GM12878 (cell line): ENCODE measurements at regions of chr6 and their contacts with region 1.

Region 1: GRCh38 chr6:42166444-42167141 is 6.6 kb upstream of the GUCA1A start:
- DNase-seq: peak; percentile 40
- ATAC-seq: peak; percentile 95
- H3K4me3 ChIP-seq: no peak overlapping the region
- H3K27ac ChIP-seq: no peak overlapping the region
- H3K4me1 ChIP-seq: no peaks in the 10 kb centered on the region
- H3K27me3 ChIP-seq: peaks cover 0 to 2% of the 10 kb centered on the region in 2 experiments; a peak in 2 of 4 replicates
- CTCF ChIP-seq: peak; percentile 95 to 98 (median 95); a peak in 5 of 6 replicates
- EP300 ChIP-seq: no peak
- POLR2A ChIP-seq: no peak
- RAD21 ChIP-seq: peak; percentile 97

Region 2: DNA sequence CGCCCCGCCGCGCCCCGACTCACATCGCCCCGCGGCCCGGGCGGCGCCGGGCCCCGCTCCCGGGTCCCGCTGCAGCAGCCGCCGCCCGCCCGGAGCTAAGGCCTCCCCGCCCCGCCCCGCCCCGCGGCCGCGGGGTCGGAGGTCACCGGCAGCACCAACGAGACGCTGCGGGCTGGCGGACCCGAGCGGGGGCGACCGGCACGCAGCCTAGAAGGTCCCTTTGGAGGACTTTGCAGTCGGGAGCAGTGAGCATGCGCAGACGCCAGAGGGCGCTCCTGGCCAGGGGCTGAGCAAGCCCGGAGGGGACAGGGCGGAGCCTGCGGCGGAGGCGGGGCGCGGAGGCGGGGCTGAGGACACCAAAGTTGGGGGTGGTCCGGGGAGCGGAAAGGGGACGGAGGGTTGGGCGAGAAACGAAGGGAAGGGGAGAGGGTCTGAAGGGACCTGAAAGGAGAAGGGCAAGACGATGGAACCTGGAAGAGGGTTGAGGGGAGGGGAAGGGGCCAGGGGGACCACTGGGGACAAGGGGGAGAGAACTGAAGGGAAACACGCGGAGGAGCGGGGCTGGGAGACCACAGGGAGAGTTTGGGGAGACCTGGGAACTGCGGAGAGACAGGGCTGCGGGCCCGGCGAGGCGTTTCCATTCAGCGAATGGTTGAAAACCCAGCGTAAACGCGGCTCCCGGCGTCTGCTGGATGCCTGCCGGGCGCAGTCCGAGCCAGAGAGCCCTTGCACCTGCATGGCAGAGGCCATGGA is 386.6 kb before region 1 on chr6 and contains the start of gene FRS3:
- CTCF ChIA-PET with region 1: no interaction called
- POLR2A ChIA-PET with region 1: no interaction called
- RAD21 ChIA-PET with region 1: interaction called, 3 read pairs
- SMC1A ChIA-PET with region 1: interaction called, 4 read pairs
- in situ Hi-C with region 1: no loop called
- intact Hi-C with region 1: loop called (anchors 2 kb)
- DNase-seq: peak; percentile 78
- ATAC-seq: peak; percentile 95
- H3K4me3 ChIP-seq: peak within 1 kb of the TSS; percentile 74
- H3K27ac ChIP-seq: no peak within 1 kb of the TSS
- H3K4me1 ChIP-seq: peaks cover 18% of the 10 kb centered on the region
- H3K27me3 ChIP-seq: no peaks in the 10 kb centered on the region
- CTCF ChIP-seq: peak; percentile 94 to 99 (median 97); a peak in 5 of 6 replicates
- EP300 ChIP-seq: 0 out of 4 replicates have a peak, but pooled peaks of 1 of the 2 experiments have one; percentile 30
- POLR2A ChIP-seq: no peak
- RAD21 ChIP-seq: peak; percentile 97
- polyA plus RNA-seq, gene FRS3: 0.05 to 0.09 TPM

Region 3: DNA sequence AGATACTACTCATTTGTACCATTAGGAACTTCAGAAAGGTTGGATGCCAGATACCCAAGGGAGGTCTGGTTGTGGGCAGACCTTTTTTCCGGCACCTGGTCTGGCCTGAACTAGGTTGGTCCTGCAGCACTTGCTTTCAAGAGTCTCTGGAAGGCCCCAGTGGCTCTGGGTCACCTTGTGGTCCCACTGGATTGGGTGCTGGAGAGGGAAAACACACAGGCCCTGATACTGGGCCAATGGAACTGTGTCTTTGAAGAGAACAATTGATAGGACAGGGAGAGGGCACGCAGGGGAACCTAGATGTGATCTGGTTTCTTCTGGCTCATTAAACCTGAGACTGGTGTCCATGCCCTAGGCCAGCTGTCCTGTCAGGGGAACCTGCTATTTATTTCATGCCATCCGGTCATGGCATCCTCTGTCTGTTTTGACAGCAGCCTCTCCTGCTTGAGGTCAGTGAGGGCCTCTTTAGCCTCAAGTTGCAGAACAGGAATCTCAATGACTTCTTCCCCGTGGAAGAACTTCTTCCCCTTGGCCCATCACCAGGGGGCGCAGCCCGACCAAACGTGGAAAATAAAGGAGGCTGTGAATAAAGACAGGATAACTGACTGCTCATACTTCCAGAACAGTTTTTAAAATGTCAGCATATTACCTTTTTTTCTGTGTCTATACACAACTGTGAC is 91.3 kb before region 1 on chr6:
- CTCF ChIA-PET with region 1: interaction called, 14 read pairs
- POLR2A ChIA-PET with region 1: no interaction called
- RAD21 ChIA-PET with region 1: interaction called, 3 read pairs
- SMC1A ChIA-PET with region 1: interaction called, 5 read pairs
- in situ Hi-C with region 1: loop called (anchors 5 kb)
- intact Hi-C with region 1: loop called (anchors 1 kb)
- DNase-seq: no peak
- ATAC-seq: peak; percentile 68
- H3K4me3 ChIP-seq: no peak overlapping the region
- H3K27ac ChIP-seq: no peak overlapping the region
- H3K4me1 ChIP-seq: no peaks in the 10 kb centered on the region
- H3K27me3 ChIP-seq: no peaks in the 10 kb centered on the region
- CTCF ChIP-seq: peak; percentile 72 to 85 (median 81)
- EP300 ChIP-seq: no peak
- POLR2A ChIP-seq: no peak
- RAD21 ChIP-seq: peak; percentile 81

Region 4: GRCh38 chr6:42104095-42104806 is 62.3 kb before region 1 on chr6:
- CTCF ChIA-PET with region 1: interaction called, 12 read pairs
- POLR2A ChIA-PET with region 1: no interaction called
- RAD21 ChIA-PET with region 1: interaction called, 9 read pairs
- SMC1A ChIA-PET with region 1: interaction called, 3 read pairs
- in situ Hi-C with region 1: no loop called
- intact Hi-C with region 1: no loop called
- DNase-seq: peak; percentile 15
- ATAC-seq: peak; percentile 90
- H3K4me3 ChIP-seq: peak overlapping the region; percentile 68; the same call in 1 of the 2 replicates
- H3K27ac ChIP-seq: no peak overlapping the region
- H3K4me1 ChIP-seq: no peaks in the 10 kb centered on the region
- H3K27me3 ChIP-seq: peaks cover 0 to 3% of the 10 kb centered on the region in 2 experiments; a peak in 1 of 4 replicates
- CTCF ChIP-seq: peak; percentile 64 to 86 (median 82)
- EP300 ChIP-seq: no peak
- POLR2A ChIP-seq: 0 out of 2 replicates have a peak, but pooled peaks have one; percentile 20
- RAD21 ChIP-seq: peak; percentile 38; the same call in 1 of the 2 replicates

Region 5: DNA sequence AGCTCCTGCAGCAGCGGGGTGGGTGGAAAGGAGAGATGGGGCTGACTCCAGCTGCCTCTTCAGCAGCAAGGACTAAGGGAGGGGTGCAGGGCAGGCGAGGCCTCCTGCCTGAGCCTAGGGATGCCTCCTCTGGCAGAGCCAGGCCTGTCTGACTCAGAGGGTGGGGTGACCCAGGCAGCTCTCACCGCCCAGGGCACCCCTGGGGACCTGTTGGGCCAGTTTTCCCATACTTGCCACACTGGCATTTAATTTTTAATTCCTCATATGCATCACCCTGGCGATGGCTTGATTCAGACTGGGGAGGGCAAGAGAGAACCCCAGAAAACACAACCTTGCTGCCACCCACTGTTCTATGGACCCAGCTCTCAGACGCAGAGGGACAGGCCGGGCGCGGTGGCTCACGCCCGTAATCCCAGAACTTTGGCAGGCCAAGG is 43.9 kb before region 1 on chr6:
- CTCF ChIA-PET with region 1: no interaction called
- POLR2A ChIA-PET with region 1: no interaction called
- RAD21 ChIA-PET with region 1: no interaction called
- SMC1A ChIA-PET with region 1: no interaction called
- in situ Hi-C with region 1: no loop called
- intact Hi-C with region 1: no loop called
- DNase-seq: no peak
- ATAC-seq: no peak
- H3K4me3 ChIP-seq: no peak overlapping the region
- H3K27ac ChIP-seq: no peak overlapping the region
- H3K4me1 ChIP-seq: no peaks in the 10 kb centered on the region
- H3K27me3 ChIP-seq: no peaks in the 10 kb centered on the region
- CTCF ChIP-seq: no peak
- EP300 ChIP-seq: no peak
- POLR2A ChIP-seq: no peak
- RAD21 ChIP-seq: no peak

Region 6: DNA sequence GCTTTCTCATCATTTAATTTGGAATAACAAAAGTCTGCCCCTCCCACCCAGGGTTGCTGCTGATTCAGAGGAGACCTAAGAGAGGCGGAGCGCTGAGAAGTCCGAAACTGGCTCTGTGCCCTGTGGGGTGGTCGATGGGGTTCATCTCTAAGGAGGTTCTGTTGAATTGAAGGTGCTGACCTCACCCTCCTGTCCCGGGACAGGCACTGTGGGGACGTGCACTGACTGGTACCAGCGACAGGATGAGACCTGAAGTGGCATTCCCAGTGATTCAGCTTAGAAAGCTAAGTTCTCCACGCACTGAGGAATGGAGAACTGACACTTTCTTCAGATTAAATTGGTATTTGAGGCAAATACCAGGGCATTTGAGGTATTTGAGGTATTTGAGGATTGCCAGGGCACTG is 26.9 kb after region 1 on chr6:
- CTCF ChIA-PET with region 1: no interaction called
- POLR2A ChIA-PET with region 1: no interaction called
- RAD21 ChIA-PET with region 1: no interaction called
- SMC1A ChIA-PET with region 1: no interaction called
- in situ Hi-C with region 1: no loop called
- intact Hi-C with region 1: no loop called
- DNase-seq: no peak
- ATAC-seq: no peak
- H3K4me3 ChIP-seq: no peak overlapping the region
- H3K27ac ChIP-seq: no peak overlapping the region
- H3K4me1 ChIP-seq: no peaks in the 10 kb centered on the region; the same call in 1 of the 2 replicates
- H3K27me3 ChIP-seq: no peaks in the 10 kb centered on the region
- CTCF ChIP-seq: no peak
- EP300 ChIP-seq: no peak
- POLR2A ChIP-seq: no peak
- RAD21 ChIP-seq: no peak

Region 7: DNA sequence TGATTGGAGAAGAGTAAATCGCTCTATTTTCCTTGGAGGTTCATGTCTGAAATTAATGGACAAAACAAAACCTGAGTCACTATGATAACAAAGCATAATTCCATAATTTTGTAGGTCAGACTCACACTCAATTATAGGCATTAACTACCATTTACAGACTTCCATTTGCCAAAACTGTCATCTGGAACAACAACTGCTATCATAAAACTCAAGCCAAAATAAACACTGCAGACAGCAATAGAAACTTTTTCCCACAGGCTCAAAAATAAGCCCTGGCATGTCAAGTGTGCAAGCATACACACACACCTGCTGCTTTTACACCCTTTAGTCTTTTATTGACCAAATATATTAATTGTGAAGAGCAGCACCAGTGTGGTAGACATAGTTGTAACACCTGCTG is 44.0 kb after region 1 on chr6:
- CTCF ChIA-PET with region 1: interaction called, 31 read pairs
- POLR2A ChIA-PET with region 1: no interaction called
- RAD21 ChIA-PET with region 1: interaction called, 8 read pairs
- SMC1A ChIA-PET with region 1: interaction called, 16 read pairs
- in situ Hi-C with region 1: no loop called
- intact Hi-C with region 1: no loop called
- DNase-seq: no peak
- ATAC-seq: no peak
- H3K4me3 ChIP-seq: no peak overlapping the region
- H3K27ac ChIP-seq: no peak overlapping the region
- H3K4me1 ChIP-seq: peaks cover 18% of the 10 kb centered on the region
- H3K27me3 ChIP-seq: no peaks in the 10 kb centered on the region
- CTCF ChIP-seq: no peak
- EP300 ChIP-seq: no peak
- POLR2A ChIP-seq: no peak
- RAD21 ChIP-seq: no peak

Region 8: GRCh38 chr6:42217519-42218367 is 51.1 kb after region 1 on chr6 and contains the start of gene MRPS10:
- CTCF ChIA-PET with region 1: interaction called, 31 read pairs
- POLR2A ChIA-PET with region 1: no interaction called
- RAD21 ChIA-PET with region 1: interaction called, 8 read pairs
- SMC1A ChIA-PET with region 1: interaction called, 16 read pairs
- in situ Hi-C with region 1: no loop called
- intact Hi-C with region 1: no loop called
- DNase-seq: peak; percentile 74
- ATAC-seq: peak; percentile 98
- H3K4me3 ChIP-seq: peak within 1 kb of the TSS; percentile 85
- H3K27ac ChIP-seq: peak within 1 kb of the TSS; percentile 65
- H3K4me1 ChIP-seq: peaks cover 5% of the 10 kb centered on the region; the same call in 1 of the 2 replicates
- H3K27me3 ChIP-seq: no peaks in the 10 kb centered on the region
- CTCF ChIP-seq: no peak
- EP300 ChIP-seq: 0 out of 4 replicates have a peak, but pooled peaks of 1 of the 2 experiments have one; percentile 14
- POLR2A ChIP-seq: peak; percentile 97
- RAD21 ChIP-seq: no peak
- polyA plus RNA-seq, gene MRPS10: 70.4 to 83.3 TPM